ENCODE measurements at regions of chr9 and their contacts with region 1.

Region 1: GRCh38 chr9:105244003-105244733 is at the start of gene SLC44A1:
- DNase-seq: peak; percentile 96
- ATAC-seq: peak; percentile 96
- H3K4me3 Mint-ChIP-seq: peak within 1 kb of the TSS; percentile 86
- H3K27ac Mint-ChIP-seq: peak within 1 kb of the TSS; percentile 77
- H3K4me1 Mint-ChIP-seq: peaks cover 22% of the 10 kb centered on the region
- H3K27me3 Mint-ChIP-seq: peaks cover 12% of the 10 kb centered on the region
- total RNA-seq, gene SLC44A1: 9.7 to 10.4 TPM

Region 2: DNA sequence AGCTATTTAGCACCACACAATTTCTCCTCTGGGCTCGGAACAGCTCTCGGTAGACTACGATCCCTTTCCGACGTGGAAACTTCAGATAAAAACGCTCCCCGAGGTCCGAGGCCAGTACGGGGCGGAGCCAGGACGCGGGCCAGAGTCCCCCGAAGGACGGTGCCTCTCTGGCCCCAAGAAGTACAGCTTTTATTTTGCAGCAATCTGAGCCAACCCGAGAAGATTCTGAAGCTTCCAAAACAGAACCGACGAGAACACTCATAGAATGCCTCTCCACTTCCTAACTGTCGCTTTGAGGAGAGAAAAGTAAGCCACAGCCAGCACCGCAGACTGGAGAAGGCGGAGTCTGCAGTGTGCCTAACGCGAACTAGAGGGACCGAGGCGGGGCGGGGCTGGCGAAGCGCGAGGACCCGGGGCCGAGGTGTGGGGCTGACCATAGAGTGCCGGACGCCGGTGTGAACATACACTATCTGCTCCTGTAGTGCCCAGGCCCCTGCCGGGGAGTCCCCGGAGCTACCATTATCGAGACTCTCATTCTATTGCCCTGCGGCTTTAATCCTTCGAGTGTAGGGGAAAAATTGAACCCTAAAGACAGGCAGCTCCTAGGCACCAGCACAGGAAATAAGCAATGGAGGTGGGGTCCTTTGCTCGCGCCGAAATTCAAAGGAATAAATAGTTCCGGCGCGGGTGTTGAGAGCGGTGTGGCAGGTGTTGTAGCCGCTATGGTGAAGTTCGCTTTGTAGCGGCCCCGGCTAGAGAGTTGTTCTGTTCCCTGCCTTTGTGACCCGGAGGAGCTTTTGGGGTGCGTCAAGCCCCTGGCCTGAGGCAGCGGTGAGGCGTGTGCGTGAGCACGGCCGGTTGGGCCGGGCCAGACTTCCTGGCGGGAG is 1150.3 kb before region 1 on chr9 and contains the start of gene SMC2:
- CTCF ChIA-PET with region 1: no interaction called
- POLR2A ChIA-PET with region 1: no interaction called
- intact Hi-C with region 1: loop called in 1 of 2 experiments (anchors 10 kb)
- DNase-seq: peak; percentile 96
- ATAC-seq: peak; percentile 91
- H3K4me3 Mint-ChIP-seq: peak within 1 kb of the TSS; percentile 88
- H3K27ac Mint-ChIP-seq: peak within 1 kb of the TSS; percentile 99
- H3K4me1 Mint-ChIP-seq: peaks cover 37% of the 10 kb centered on the region
- H3K27me3 Mint-ChIP-seq: no peaks in the 10 kb centered on the region
- total RNA-seq, gene SMC2: 78.4 to 84.5 TPM

Region 3: DNA sequence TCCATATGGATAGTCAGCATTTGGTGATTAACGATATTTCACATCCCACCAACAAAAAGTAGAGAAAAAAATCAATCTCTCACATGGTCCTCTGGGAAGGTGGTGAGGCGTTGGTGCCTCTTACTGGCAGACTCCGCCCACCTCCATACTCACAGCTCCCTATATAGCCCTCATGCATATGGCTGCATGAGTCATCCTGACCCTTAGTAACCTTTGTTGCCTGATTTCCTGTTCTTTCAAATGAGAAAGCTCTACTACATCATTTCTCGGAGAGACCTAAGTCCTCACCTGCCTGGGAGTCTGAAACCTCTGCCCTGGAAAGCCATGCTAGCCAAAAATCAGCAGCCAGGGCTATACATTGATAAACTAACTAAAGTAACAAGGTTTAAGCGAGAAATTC is 282.9 kb before region 1 on chr9:
- CTCF ChIA-PET with region 1: no interaction called
- POLR2A ChIA-PET with region 1: no interaction called
- intact Hi-C with region 1: loop called in 1 of 2 experiments (anchors 1 kb)
- DNase-seq: peak; percentile 86
- ATAC-seq: peak; percentile 100
- H3K4me3 Mint-ChIP-seq: peak overlapping the region; percentile 18
- H3K27ac Mint-ChIP-seq: peak overlapping the region; percentile 91
- H3K4me1 Mint-ChIP-seq: peaks cover 32% of the 10 kb centered on the region
- H3K27me3 Mint-ChIP-seq: no peaks in the 10 kb centered on the region

Region 4: GRCh38 chr9:105198865-105199264 is 45.3 kb before region 1 on chr9:
- CTCF ChIA-PET with region 1: no interaction called
- POLR2A ChIA-PET with region 1: no interaction called
- intact Hi-C with region 1: no loop called
- DNase-seq: no peak
- ATAC-seq: no peak
- H3K4me3 Mint-ChIP-seq: no peak overlapping the region
- H3K27ac Mint-ChIP-seq: no peak overlapping the region
- H3K4me1 Mint-ChIP-seq: no peaks in the 10 kb centered on the region
- H3K27me3 Mint-ChIP-seq: peaks cover 2% of the 10 kb centered on the region

Region 5: GRCh38 chr9:105299190-105299854 is 55.2 kb after region 1 on chr9:
- CTCF ChIA-PET with region 1: no interaction called
- POLR2A ChIA-PET with region 1: no interaction called
- intact Hi-C with region 1: loop called in 1 of 2 experiments (anchors 2 kb)
- DNase-seq: peak; percentile 34
- ATAC-seq: peak; percentile 80
- H3K4me3 Mint-ChIP-seq: no peak overlapping the region
- H3K27ac Mint-ChIP-seq: no peak overlapping the region
- H3K4me1 Mint-ChIP-seq: peaks cover 14% of the 10 kb centered on the region
- H3K27me3 Mint-ChIP-seq: no peaks in the 10 kb centered on the region

Region 6: DNA sequence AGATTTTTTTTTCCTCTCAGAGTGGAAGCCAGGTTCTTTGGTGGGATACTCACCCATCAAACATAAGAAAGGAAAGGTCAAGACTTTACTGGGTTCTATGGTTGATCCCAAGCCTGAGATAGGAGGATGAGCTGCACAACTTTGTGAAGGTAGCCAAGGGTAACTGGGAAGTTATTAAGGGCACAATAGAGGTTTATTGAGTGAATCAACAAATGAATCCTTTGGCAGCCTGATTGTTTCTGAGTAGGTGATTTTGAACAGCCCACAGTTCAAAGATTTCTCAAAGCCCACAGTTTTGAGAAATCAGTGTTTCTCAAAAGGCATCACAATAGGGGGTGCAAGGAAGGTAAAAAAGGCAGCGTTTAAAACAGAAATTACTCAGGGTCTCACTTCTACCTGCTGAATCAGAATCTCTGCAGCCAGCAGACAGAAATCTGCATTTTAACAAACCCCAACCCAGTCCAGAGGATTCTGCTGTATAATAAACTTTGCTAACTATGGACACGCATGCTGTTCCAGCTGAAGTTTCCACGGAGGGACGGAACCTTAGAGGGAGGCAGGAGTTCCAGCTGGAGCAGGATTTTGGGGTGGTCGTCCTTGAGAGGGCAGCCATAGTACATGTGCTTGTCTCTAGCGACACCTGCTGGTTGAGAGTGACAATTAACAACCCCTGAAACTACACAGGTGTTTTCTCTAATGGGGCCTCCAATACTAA is 170.9 kb after region 1 on chr9:
- CTCF ChIA-PET with region 1: interaction called, 3 read pairs
- POLR2A ChIA-PET with region 1: no interaction called
- intact Hi-C with region 1: loop called in 1 of 2 experiments (anchors 2 kb)
- DNase-seq: peak; percentile 70
- ATAC-seq: peak; percentile 71
- H3K4me3 Mint-ChIP-seq: no peak overlapping the region
- H3K27ac Mint-ChIP-seq: no peak overlapping the region
- H3K4me1 Mint-ChIP-seq: no peaks in the 10 kb centered on the region
- H3K27me3 Mint-ChIP-seq: peaks cover 36% of the 10 kb centered on the region

Region 7: DNA sequence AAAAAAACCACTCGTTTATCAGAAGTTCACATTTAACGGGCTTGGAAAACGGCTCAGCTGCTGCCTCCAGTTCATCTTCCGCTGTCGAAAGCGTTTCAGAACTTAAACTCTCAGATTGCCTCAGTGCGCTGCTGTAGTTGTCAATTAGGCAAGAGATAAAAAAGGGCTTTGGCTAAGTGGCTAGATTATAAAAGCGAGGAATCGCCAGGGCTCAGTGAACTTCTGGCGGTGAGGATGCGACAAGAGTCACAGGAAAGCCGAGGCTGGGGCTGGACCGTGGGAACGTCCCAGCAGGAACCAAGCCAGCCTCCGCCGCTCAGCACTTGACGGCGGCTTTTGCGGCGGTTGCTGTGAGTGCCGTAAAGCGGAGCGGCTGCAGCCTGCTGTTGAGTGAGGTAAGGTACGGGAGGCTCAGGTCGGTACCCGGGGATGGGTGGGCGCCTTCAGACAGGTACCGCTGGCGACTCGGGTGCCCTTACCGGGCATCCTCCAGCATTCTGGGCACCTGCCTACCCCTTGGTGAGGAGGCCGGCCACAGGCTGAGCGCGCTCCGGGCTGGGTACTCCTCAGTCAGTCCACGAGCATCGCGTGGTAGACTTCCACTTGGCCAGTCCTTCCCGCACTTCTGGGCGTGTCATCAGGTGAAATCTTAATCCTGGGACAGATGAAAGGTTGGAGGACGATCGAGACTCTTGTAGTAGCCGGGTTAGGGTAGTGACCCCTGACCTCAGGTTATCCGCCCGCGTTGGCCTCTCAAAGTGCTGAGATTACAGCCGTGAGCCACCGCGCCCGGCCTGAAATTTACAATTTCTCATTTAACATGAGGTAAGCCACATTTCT is 313.8 kb after region 1 on chr9 and contains the start of gene FKTN:
- CTCF ChIA-PET with region 1: no interaction called
- POLR2A ChIA-PET with region 1: no interaction called
- intact Hi-C with region 1: loop called in 1 of 2 experiments (anchors 5 kb)
- DNase-seq: peak; percentile 91
- ATAC-seq: peak; percentile 97
- H3K4me3 Mint-ChIP-seq: peak within 1 kb of the TSS; percentile 94
- H3K27ac Mint-ChIP-seq: peak within 1 kb of the TSS; percentile 85
- H3K4me1 Mint-ChIP-seq: peaks cover 18% of the 10 kb centered on the region
- H3K27me3 Mint-ChIP-seq: no peaks in the 10 kb centered on the region
- total RNA-seq, gene FKTN: 12.1 to 16.0 TPM

Measured in activated CD4-positive, alpha-beta T cell treated with anti-CD3 and anti-CD28 coated beads for 36 hours (primary cell).